Activated CD4-positive, alpha-beta memory T cell treated with anti-CD3 and anti-CD28 coated beads, Interleukin-2, amount 10 ng/mL, durations not matched to agents 7 days and 5 days (primary cell): ENCODE measurements at regions of chr9 and their contacts with region 1.

Region 1: DNA sequence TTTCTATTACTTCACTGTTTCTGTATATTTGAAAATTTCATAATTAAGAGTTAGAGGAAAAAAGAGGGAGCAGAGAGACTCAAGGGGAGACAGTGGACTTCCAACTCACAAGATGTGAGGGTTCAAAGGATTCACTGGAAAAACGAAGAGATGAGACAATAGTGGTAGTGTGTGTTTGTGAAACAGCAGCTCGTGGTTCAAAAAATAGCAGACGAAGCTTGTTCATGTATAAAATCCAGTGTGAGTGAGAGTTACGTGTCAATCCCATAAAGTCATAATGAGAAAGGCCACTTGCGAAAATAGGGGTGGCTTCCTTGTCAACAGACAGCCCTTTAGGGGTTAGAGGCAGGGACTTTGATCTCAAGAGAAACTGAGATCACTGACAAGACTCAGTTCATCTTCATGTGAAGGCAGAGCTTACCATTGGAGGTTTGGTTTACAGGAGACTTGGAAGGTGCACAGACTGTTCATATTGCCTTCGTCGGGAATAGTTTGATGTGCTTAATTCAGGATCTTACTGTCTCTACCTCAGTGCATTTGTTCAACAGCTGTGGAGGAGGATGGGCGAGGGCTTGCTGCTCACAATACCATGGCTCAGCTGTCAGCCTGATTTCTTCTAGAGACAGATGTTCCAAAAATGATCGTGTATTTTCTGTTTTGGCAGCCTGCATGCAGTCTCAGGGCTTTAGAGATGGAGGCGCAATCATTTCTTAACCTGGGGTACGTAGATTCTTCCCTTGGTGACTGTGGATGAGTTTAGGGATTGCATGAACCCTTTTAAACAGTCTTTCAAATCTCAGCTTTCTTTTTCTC is 105.7 kb upstream of the KLF9 start:
- DNase-seq: peak; percentile 18
- H3K4me3 Mint-ChIP-seq: peak overlapping the region; percentile 26
- H3K27ac Mint-ChIP-seq: peak overlapping the region; percentile 55
- H3K4me1 Mint-ChIP-seq: peaks cover 20% of the 10 kb centered on the region
- H3K27me3 Mint-ChIP-seq: no peaks in the 10 kb centered on the region

Region 2: GRCh38 chr9:70563431-70564204 is 43.5 kb after region 1 on chr9:
- CTCF ChIA-PET with region 1: no interaction called
- POLR2A ChIA-PET with region 1: interaction called, 10 read pairs
- DNase-seq: peak; percentile 79
- H3K4me3 Mint-ChIP-seq: peak overlapping the region; percentile 49
- H3K27ac Mint-ChIP-seq: peak overlapping the region; percentile 99
- H3K4me1 Mint-ChIP-seq: peaks cover 50% of the 10 kb centered on the region
- H3K27me3 Mint-ChIP-seq: no peaks in the 10 kb centered on the region